ENCODE measurements at regions of chr2 and their contacts with region 1.

Region 1: GRCh38 chr2:191677646-191678436 is at the start of gene NABP1:
- DNase-seq: peak; percentile 98
- H3K4me3 ChIP-seq: peak within 1 kb of the TSS; percentile 80
- H3K27ac ChIP-seq: peak within 1 kb of the TSS; percentile 91
- H3K4me1 ChIP-seq: peaks cover 48% of the 10 kb centered on the region
- H3K27me3 ChIP-seq: no peaks in the 10 kb centered on the region
- CTCF ChIP-seq: no peak
- total RNA-seq, gene NABP1: 33.2 and 38.4 TPM in 2 replicates

Region 2: DNA sequence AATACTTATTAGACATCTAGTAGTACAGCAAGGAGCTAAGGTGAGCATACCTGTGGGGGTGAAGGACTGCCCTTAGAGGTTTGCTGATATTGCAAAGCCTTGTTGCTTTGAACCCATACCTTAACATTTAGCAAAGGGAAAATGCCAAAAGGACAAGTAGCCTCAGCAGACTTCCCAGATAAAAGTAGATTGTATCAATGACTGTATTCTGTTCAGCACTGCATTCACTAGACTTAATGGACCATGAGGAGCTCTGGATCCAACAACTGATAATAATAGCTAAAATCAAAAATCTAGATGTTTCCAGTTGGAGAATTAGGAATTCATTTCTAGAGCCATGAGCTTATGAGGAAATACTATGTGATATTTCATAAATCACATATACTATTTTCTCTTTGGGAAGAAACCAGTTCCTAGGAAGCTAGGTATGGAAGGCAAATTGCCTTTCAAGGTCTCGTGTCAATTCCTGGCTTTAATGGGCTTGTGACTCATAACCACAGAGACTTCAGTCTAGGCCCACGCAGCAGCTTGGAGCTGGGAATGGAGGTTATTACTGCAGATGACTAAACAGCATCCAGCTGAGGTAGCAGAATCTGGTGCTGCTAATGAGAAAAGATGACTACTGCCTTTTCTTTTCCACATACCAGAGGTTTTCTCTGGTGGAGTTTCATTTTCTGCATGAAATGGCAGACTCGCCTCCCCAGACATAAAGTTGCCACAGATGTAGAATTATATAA is 191.1 kb before region 1 on chr2:
- CTCF ChIA-PET with region 1: no interaction called
- POLR2A ChIA-PET with region 1: no interaction called
- intact Hi-C with region 1: no loop called
- DNase-seq: peak; percentile 87
- H3K4me3 ChIP-seq: no peak overlapping the region
- H3K27ac ChIP-seq: no peak overlapping the region
- H3K4me1 ChIP-seq: peaks cover 11% of the 10 kb centered on the region
- H3K27me3 ChIP-seq: no peaks in the 10 kb centered on the region
- CTCF ChIP-seq: no peak

Region 3: DNA sequence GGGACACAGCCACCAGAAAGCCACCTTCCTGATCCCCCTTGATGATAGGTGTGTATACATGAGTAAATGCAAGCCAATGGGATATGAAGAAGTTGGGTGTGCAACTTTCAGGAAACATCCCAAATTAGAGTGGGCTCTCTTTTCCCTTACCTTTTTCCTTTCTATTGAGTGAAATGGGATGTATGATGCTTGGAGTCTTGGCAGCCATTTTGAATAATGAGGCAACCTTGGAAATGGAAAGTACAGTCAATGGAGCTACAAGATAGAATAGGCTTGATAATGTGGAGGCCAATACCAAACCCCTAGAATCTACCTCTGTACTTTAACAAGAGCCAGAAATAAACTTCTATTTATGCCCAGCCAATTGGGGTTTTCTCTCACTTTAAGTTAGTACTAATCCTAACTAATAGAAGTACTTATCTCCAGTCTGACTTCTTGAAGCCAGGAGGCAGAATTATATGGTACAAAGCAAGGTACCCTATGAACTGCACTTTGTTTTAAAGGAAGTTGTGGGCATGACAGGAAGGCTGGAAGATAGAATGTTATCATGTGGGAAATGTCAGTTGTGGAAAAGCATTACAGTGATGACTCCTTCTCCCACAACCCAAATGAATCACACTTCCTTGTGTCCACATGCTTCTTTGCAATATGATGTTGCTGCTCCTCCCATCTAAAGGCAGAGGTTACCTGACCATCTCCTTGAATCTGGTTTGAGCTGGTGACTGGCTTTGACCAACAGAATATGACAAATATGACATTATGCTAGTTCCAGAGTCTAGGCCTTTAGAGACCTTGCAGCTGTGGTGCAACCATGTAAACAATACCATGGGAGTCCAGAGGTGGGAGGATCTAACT is 12.8 kb before region 1 on chr2:
- CTCF ChIA-PET with region 1: no interaction called
- POLR2A ChIA-PET with region 1: no interaction called
- intact Hi-C with region 1: no loop called
- DNase-seq: no peak
- H3K4me3 ChIP-seq: no peak overlapping the region
- H3K27ac ChIP-seq: no peak overlapping the region
- H3K4me1 ChIP-seq: no peaks in the 10 kb centered on the region
- H3K27me3 ChIP-seq: no peaks in the 10 kb centered on the region
- CTCF ChIP-seq: no peak

Region 4: DNA sequence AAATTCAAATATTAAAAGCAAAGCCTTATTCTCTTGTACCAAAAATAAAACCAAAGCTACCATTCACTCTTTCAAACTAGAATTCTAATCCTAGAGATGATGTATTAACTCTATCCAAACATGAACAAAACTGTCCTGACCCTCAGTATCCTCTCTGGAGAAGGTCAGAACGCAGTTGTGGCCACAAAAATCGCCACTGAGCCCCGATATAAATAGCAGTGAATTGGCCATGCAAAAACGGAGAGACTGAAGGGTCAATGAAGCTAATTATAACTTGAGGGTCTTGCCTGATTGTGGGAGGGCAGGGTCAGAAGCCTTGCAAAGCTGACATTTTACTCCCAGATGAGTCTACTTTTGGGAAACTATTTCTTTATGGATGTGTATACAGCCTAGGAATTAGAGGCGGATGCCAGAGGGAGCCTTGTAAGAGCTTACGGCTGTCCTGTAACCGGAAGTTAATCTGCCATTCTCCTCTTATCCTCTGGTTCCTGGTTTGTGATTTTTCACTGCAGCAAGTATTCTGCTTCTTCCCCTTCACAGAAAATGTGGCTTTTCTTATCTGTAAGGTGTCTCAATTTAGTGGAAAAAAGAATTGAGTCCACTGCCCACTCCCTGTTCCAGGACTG is 141.0 kb after region 1 on chr2:
- CTCF ChIA-PET with region 1: no interaction called
- POLR2A ChIA-PET with region 1: no interaction called
- intact Hi-C with region 1: no loop called
- DNase-seq: no peak
- H3K4me3 ChIP-seq: no peak overlapping the region
- H3K27ac ChIP-seq: no peak overlapping the region
- H3K4me1 ChIP-seq: no peaks in the 10 kb centered on the region
- H3K27me3 ChIP-seq: no peaks in the 10 kb centered on the region
- CTCF ChIP-seq: no peak

Region 5: GRCh38 chr2:192146069-192147015 is 468.5 kb after region 1 on chr2:
- CTCF ChIA-PET with region 1: interaction called, 10 read pairs
- POLR2A ChIA-PET with region 1: no interaction called
- intact Hi-C with region 1: no loop called
- DNase-seq: peak; percentile 65
- H3K4me3 ChIP-seq: no peak overlapping the region
- H3K27ac ChIP-seq: peak overlapping the region; percentile 25
- H3K4me1 ChIP-seq: peaks cover 37% of the 10 kb centered on the region
- H3K27me3 ChIP-seq: no peaks in the 10 kb centered on the region
- CTCF ChIP-seq: no peak

Region 6: GRCh38 chr2:192155511-192156118 is 477.8 kb after region 1 on chr2:
- CTCF ChIA-PET with region 1: no interaction called
- POLR2A ChIA-PET with region 1: no interaction called
- intact Hi-C with region 1: loop called (anchors 5 kb)
- DNase-seq: no peak
- H3K4me3 ChIP-seq: no peak overlapping the region
- H3K27ac ChIP-seq: no peak overlapping the region
- H3K4me1 ChIP-seq: peaks cover 30% of the 10 kb centered on the region
- H3K27me3 ChIP-seq: no peaks in the 10 kb centered on the region
- CTCF ChIP-seq: no peak